ENCODE measurements at regions of chr3 and their contacts with region 1.

Region 1: DNA sequence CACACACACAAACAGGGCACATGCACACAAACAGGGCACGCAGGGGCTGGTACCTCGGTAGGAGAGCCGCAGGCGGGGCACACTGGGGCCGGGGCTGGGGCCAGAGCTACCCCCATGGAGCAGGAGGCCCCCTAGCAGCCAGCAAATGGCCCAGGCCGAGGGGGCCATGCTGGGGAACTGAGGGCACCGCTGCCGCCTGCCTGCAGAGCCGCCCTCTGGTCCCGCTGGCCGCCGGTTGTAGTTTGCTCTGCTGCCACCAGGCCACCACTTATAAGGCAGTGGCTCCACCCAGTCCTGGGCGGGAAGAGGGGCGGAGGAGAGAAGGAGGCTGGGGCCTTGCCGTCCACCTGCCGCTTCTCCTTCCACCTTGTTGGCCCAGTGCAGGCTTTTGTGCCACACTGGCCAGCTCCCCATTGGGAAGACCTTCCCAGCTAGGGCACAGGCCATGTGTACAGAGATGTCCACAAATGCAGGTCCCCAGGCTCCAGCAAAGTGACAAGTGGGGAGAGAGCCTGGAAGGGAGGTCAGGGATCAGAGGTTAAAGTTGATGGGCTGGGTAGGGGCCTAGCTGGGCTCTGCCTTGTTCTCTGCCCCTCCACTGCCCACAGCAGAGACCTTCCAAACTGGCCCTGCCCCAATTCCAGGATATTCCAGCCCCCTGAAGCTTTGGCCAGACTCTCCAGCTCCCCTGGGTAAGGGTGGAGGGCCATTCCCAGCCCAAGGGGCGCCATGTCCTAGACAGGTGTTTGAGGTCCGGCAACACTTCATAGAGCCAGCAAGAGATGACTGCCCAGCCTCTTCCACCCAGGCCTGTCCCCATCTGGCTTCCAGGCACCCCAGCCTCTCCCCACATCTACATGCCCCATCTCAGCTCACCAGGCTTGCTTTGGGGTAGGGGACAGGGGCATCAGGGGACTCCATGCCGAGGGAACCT is at the start of gene SEMA3G:
- DNase-seq: peak; percentile 83
- ATAC-seq: peak; percentile 88
- H3K4me3 Mint-ChIP-seq: peak within 1 kb of the TSS; percentile 16; the same call in 1 of the 2 replicates
- H3K27ac Mint-ChIP-seq: no peak within 1 kb of the TSS
- H3K4me1 Mint-ChIP-seq: peaks cover 11% of the 10 kb centered on the region; the same call in 1 of the 2 replicates
- H3K27me3 Mint-ChIP-seq: no peaks in the 10 kb centered on the region; the same call in 1 of the 2 replicates
- CTCF ChIP-seq: no peak
- total RNA-seq, gene SEMA3G: 1.6 to 2.5 TPM (median 2.5 TPM) in 3 replicates

Region 2: GRCh38 chr3:51860703-51861665 is 584.1 kb before region 1 on chr3 and contains the start of gene IQCF2:
- CTCF ChIA-PET with region 1: no interaction called
- POLR2A ChIA-PET with region 1: no interaction called
- DNase-seq: no peak
- ATAC-seq: no peak
- H3K4me3 Mint-ChIP-seq: no peak within 1 kb of the TSS
- H3K27ac Mint-ChIP-seq: no peak within 1 kb of the TSS
- H3K4me1 Mint-ChIP-seq: peaks cover 5% of the 10 kb centered on the region; the same call in 1 of the 2 replicates
- H3K27me3 Mint-ChIP-seq: peaks cover 8% of the 10 kb centered on the region; the same call in 1 of the 2 replicates
- CTCF ChIP-seq: no peak
- total RNA-seq, gene IQCF2: not detected in 3 replicates

Region 3: GRCh38 chr3:52253314-52254304 is 191.5 kb before region 1 on chr3:
- CTCF ChIA-PET with region 1: no interaction called
- POLR2A ChIA-PET with region 1: no interaction called
- DNase-seq: no peak
- ATAC-seq: no peak; the same call in 1 of the 2 replicates
- H3K4me3 Mint-ChIP-seq: no peak overlapping the region
- H3K27ac Mint-ChIP-seq: no peak overlapping the region
- H3K4me1 Mint-ChIP-seq: no peaks in the 10 kb centered on the region
- H3K27me3 Mint-ChIP-seq: no peaks in the 10 kb centered on the region
- CTCF ChIP-seq: no peak

Region 4: GRCh38 chr3:52299879-52300611 is 145.1 kb before region 1 on chr3:
- CTCF ChIA-PET with region 1: no interaction called
- POLR2A ChIA-PET with region 1: no interaction called
- DNase-seq: peak; percentile 26
- ATAC-seq: peak; percentile 55
- H3K4me3 Mint-ChIP-seq: peak overlapping the region; percentile 65
- H3K27ac Mint-ChIP-seq: no peak overlapping the region
- H3K4me1 Mint-ChIP-seq: peaks cover 18% of the 10 kb centered on the region
- H3K27me3 Mint-ChIP-seq: peaks cover 6% of the 10 kb centered on the region
- CTCF ChIP-seq: no peak

Region 5: GRCh38 chr3:52428151-52429005 is 16.7 kb before region 1 on chr3:
- CTCF ChIA-PET with region 1: interaction called, 43 read pairs
- POLR2A ChIA-PET with region 1: interaction called, 8 read pairs
- DNase-seq: peak; percentile 38
- ATAC-seq: peak; percentile 91
- H3K4me3 Mint-ChIP-seq: no peak overlapping the region
- H3K27ac Mint-ChIP-seq: no peak overlapping the region
- H3K4me1 Mint-ChIP-seq: peaks cover 5% of the 10 kb centered on the region
- H3K27me3 Mint-ChIP-seq: no peaks in the 10 kb centered on the region
- CTCF ChIP-seq: 0 out of 2 replicates have a peak, but pooled peaks have one; percentile 46

Region 6: GRCh38 chr3:52458770-52459545 is 13.8 kb after region 1 on chr3:
- CTCF ChIA-PET with region 1: interaction called, 12 read pairs
- POLR2A ChIA-PET with region 1: no interaction called
- DNase-seq: no peak
- ATAC-seq: no peak
- H3K4me3 Mint-ChIP-seq: no peak overlapping the region
- H3K27ac Mint-ChIP-seq: no peak overlapping the region
- H3K4me1 Mint-ChIP-seq: peaks cover 23% of the 10 kb centered on the region
- H3K27me3 Mint-ChIP-seq: no peaks in the 10 kb centered on the region; the same call in 1 of the 2 replicates
- CTCF ChIP-seq: no peak

Region 7: GRCh38 chr3:52498137-52499054 is 53.3 kb after region 1 on chr3:
- CTCF ChIA-PET with region 1: no interaction called
- POLR2A ChIA-PET with region 1: no interaction called
- DNase-seq: no peak
- ATAC-seq: no peak
- H3K4me3 Mint-ChIP-seq: no peak overlapping the region
- H3K27ac Mint-ChIP-seq: no peak overlapping the region
- H3K4me1 Mint-ChIP-seq: no peaks in the 10 kb centered on the region
- H3K27me3 Mint-ChIP-seq: no peaks in the 10 kb centered on the region
- CTCF ChIP-seq: no peak

Measured in WTC11 (cell line).